ENCODE measurements at regions of chr11 and their contacts with region 1.

Region 1: GRCh38 chr11:34585735-34586487 is 35.0 kb upstream of the EHF start:
- DNase-seq: peak; percentile 49 to 79
- ATAC-seq: peak; percentile 79 to 83
- H3K4me3 ChIP-seq: no peak overlapping the region
- H3K27ac ChIP-seq: peak overlapping the region; percentile 84 to 91
- H3K4me1 ChIP-seq: peaks cover 32% of the 10 kb centered on the region
- CTCF ChIP-seq: peak; percentile 88
- EP300 ChIP-seq: no peak
- POLR2A ChIP-seq: no peak
- RAD21 ChIP-seq: peak; percentile 96 to 99

Region 2: DNA sequence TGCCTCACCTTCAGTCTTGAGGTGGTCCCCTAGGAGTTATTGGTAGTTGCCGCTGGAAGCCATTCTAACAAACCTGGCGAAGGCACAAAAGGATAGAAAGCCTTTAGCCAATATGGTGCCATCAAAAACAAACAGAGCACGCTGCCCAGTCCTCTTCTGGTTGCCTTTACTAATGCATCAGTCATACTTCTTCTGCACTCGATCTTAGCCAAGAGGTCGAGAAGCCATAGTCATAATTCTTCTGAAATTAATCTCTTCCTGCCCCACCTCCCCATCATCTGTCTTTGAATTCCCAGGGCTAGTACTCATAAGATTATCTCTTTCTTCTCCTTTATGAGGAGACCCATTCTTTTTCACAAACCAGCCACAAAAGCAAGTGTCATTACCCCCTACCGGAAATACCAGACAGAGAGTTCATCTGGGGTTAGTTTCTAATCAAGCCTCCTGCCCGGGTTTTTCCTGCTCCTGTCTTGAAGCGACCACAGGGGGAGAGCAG is 13.5 kb after region 1 on chr11:
- CTCF ChIA-PET with region 1: interaction called, 39 read pairs
- POLR2A ChIA-PET with region 1: interaction called, 6 read pairs
- DNase-seq: peak; percentile 76 to 88
- ATAC-seq: peak; percentile 44 to 57
- H3K4me3 ChIP-seq: no peak overlapping the region
- H3K27ac ChIP-seq: peak overlapping the region; percentile 98 to 99
- H3K4me1 ChIP-seq: peaks cover 57% of the 10 kb centered on the region
- CTCF ChIP-seq: no peak
- EP300 ChIP-seq: peak; percentile 84 to 96; a peak in 4 of 5 replicates
- POLR2A ChIP-seq: no peak
- RAD21 ChIP-seq: peak in 1 of 2 experiments; percentile 49; a peak in 3 of 5 replicates

Region 3: GRCh38 chr11:34653826-34654490 is 68.0 kb after region 1 on chr11:
- CTCF ChIA-PET with region 1: interaction called, 63 read pairs
- POLR2A ChIA-PET with region 1: interaction called, 22 read pairs
- DNase-seq: peak; percentile 82 to 98
- ATAC-seq: peak; percentile 91 to 94
- H3K4me3 ChIP-seq: no peak overlapping the region
- H3K27ac ChIP-seq: peak overlapping the region; percentile 94 to 99
- H3K4me1 ChIP-seq: peaks cover 51% of the 10 kb centered on the region
- CTCF ChIP-seq: peak; percentile 48
- EP300 ChIP-seq: peak; percentile 89 to 95
- POLR2A ChIP-seq: no peak
- RAD21 ChIP-seq: peak; percentile 86 to 93

Region 4: GRCh38 chr11:34791780-34792542 is 206.1 kb after region 1 on chr11:
- CTCF ChIA-PET with region 1: interaction called, 11 read pairs
- POLR2A ChIA-PET with region 1: no interaction called
- DNase-seq: no peak
- ATAC-seq: no peak
- H3K4me3 ChIP-seq: no peak overlapping the region
- H3K27ac ChIP-seq: peak overlapping the region in 1 of 2 experiments; percentile 50; a peak in 3 of 6 replicates
- H3K4me1 ChIP-seq: peaks cover 12% of the 10 kb centered on the region; the same call in 2 of the 3 replicates
- CTCF ChIP-seq: no peak
- EP300 ChIP-seq: no peak
- POLR2A ChIP-seq: no peak
- RAD21 ChIP-seq: no peak

Region 5: GRCh38 chr11:34899633-34900016 is 313.7 kb after region 1 on chr11:
- CTCF ChIA-PET with region 1: interaction called, 30 read pairs
- POLR2A ChIA-PET with region 1: no interaction called
- DNase-seq: peak in 1 of 2 experiments; percentile 27
- ATAC-seq: no peak
- H3K4me3 ChIP-seq: no peak overlapping the region
- H3K27ac ChIP-seq: no peak overlapping the region
- H3K4me1 ChIP-seq: no peaks in the 10 kb centered on the region
- CTCF ChIP-seq: no peak
- EP300 ChIP-seq: no peak
- POLR2A ChIP-seq: no peak
- RAD21 ChIP-seq: no peak

Region 6: DNA sequence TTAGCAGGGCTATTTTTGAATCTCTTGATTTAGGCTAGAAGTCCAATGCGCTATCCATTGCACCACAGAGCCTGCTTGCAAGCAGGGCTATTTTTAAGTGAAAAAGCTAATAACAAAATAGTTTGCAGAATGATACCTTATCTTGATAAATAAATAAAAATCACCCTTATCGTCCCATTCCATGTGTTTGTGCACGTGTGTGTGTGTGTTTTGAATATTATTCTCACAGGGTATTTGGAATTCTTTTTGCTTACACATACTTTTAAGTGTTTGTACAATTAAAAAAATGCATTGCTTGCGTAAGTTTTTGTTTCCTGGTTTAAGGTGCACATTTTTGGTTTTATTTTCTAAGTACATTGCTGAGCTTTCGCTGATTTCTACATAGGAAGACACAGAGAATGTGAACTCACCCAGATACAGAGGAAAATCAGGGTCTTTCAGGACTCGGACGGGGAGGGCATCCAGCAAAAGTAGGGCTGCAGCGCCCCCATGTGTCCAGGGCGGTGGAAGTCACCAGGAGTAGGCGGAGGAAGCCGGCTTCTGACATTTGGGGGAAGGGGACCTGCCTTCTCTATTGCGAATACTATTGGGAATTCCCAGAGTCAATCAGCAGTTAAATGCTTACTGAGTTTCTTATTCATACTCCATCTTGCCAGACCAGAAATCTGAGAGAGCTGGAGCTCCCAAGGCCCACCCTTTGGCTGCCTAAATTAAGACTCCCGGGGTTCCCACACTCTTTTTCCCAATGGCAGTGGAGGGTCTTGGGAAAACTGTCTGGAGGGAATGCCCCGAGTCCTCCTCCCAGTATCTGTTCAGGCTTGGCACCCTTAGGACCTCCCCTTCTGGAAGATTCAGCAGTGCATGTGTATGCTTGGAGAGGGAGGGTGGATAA is 806.3 kb after region 1 on chr11:
- CTCF ChIA-PET with region 1: interaction called, 20 read pairs
- POLR2A ChIA-PET with region 1: no interaction called
- DNase-seq: peak; percentile 75 to 78
- ATAC-seq: peak; percentile 94 to 95
- H3K4me3 ChIP-seq: no peak overlapping the region
- H3K27ac ChIP-seq: peak overlapping the region; percentile 67 to 75
- H3K4me1 ChIP-seq: peaks cover 37% of the 10 kb centered on the region
- CTCF ChIP-seq: peak; percentile 95
- EP300 ChIP-seq: no peak
- POLR2A ChIP-seq: no peak
- RAD21 ChIP-seq: peak; percentile 99